WTC11 (cell line): ENCODE measurements at regions of chr7 and their contacts with region 1.

Region 1: DNA sequence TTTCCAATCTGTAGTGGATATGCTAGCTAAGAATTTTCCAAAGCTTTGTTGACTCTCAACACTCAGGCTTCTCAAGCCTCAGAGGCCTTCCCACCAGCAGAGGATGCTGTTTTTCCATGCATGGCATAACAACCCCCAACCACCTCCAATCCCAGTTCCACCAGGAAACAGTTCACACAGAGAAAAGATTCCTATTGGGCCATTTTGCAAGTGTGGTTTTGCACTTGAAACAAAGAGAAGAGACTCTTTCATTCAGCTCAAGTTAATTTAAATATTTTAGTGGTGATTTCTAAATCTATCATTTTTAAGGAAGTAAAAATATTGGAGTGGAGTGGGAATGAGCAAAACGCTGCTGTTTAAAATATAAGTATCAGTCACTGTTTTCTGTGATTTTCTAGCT is 105.6 kb upstream of the COL1A2 start:
- DNase-seq: peak; percentile 77
- ATAC-seq: peak; percentile 99
- H3K4me3 Mint-ChIP-seq: no peak overlapping the region
- H3K27ac Mint-ChIP-seq: no peak overlapping the region
- H3K4me1 Mint-ChIP-seq: peaks cover 8% of the 10 kb centered on the region
- H3K27me3 Mint-ChIP-seq: no peaks in the 10 kb centered on the region
- CTCF ChIP-seq: peak; percentile 63

Region 2: GRCh38 chr7:94258418-94259300 is 30.4 kb before region 1 on chr7:
- CTCF ChIA-PET with region 1: interaction called, 11 read pairs
- POLR2A ChIA-PET with region 1: no interaction called
- DNase-seq: peak; percentile 26
- ATAC-seq: peak; percentile 90
- H3K4me3 Mint-ChIP-seq: no peak overlapping the region
- H3K27ac Mint-ChIP-seq: peak overlapping the region; percentile 45; the same call in 1 of the 2 replicates
- H3K4me1 Mint-ChIP-seq: peaks cover 13% of the 10 kb centered on the region
- H3K27me3 Mint-ChIP-seq: no peaks in the 10 kb centered on the region
- CTCF ChIP-seq: no peak

Region 3: DNA sequence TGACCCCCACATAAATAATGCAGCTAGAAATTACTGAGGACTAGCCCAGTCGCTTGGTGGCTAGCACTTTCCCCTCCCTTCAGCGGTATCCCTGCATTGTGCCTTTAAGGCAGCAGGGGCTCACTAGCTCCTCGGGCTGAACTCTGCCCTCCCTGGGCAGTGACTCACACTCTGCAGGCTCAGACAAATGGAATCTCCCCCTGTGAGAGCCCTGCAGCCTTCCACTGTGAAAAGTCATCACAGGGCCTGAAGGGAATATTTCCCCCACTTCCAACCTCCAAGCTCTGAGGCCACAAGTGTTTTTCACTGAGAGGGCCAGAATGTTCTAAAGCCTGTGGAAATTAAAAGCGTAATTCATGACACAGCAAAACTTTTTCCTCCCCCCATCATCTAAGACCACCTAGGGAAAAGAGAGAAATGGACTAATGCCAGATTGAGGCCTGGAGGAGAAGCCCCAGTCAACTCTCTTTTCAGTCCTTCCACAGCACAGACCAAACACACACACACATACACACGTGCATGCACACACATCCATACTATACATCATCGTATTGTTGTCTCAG is 12.0 kb after region 1 on chr7:
- CTCF ChIA-PET with region 1: interaction called, 57 read pairs
- POLR2A ChIA-PET with region 1: interaction called, 5 read pairs
- DNase-seq: peak; percentile 65
- ATAC-seq: peak; percentile 99
- H3K4me3 Mint-ChIP-seq: peak overlapping the region; percentile 42; the same call in 1 of the 2 replicates
- H3K27ac Mint-ChIP-seq: peak overlapping the region; percentile 84
- H3K4me1 Mint-ChIP-seq: peaks cover 47% of the 10 kb centered on the region
- H3K27me3 Mint-ChIP-seq: no peaks in the 10 kb centered on the region
- CTCF ChIP-seq: no peak

Region 4: GRCh38 chr7:94436018-94436604 is 147.0 kb after region 1 on chr7:
- CTCF ChIA-PET with region 1: interaction called, 40 read pairs
- POLR2A ChIA-PET with region 1: no interaction called
- DNase-seq: peak; percentile 67
- ATAC-seq: peak; percentile 87
- H3K4me3 Mint-ChIP-seq: no peak overlapping the region
- H3K27ac Mint-ChIP-seq: no peak overlapping the region
- H3K4me1 Mint-ChIP-seq: peaks cover 21% of the 10 kb centered on the region
- H3K27me3 Mint-ChIP-seq: no peaks in the 10 kb centered on the region
- CTCF ChIP-seq: peak; percentile 68